Activated CD8-positive, alpha-beta T cell treated with anti-CD3 and anti-CD28 coated beads for 36 hours (primary cell): ENCODE measurements at regions of chr1 and their contacts with region 1.

Region 1: GRCh38 chr1:62082456-62083363 is 111.9 kb upstream of the L1TD1 start:
- DNase-seq: peak; percentile 55
- ATAC-seq: peak; percentile 74
- H3K4me3 Mint-ChIP-seq: no peak overlapping the region
- H3K27ac Mint-ChIP-seq: no peak overlapping the region
- H3K4me1 Mint-ChIP-seq: no peaks in the 10 kb centered on the region
- H3K27me3 Mint-ChIP-seq: no peaks in the 10 kb centered on the region
- CTCF ChIP-seq: peak; percentile 93

Region 2: GRCh38 chr1:61950418-61950817 is 132.3 kb before region 1 on chr1:
- CTCF ChIA-PET with region 1: no interaction called
- POLR2A ChIA-PET with region 1: no interaction called
- intact Hi-C with region 1: no loop called
- DNase-seq: no peak
- ATAC-seq: no peak
- H3K4me3 Mint-ChIP-seq: no peak overlapping the region
- H3K27ac Mint-ChIP-seq: no peak overlapping the region
- H3K4me1 Mint-ChIP-seq: no peaks in the 10 kb centered on the region
- H3K27me3 Mint-ChIP-seq: no peaks in the 10 kb centered on the region
- CTCF ChIP-seq: peak; percentile 47

Region 3: GRCh38 chr1:61973100-61973837 is 109.4 kb before region 1 on chr1:
- CTCF ChIA-PET with region 1: no interaction called
- POLR2A ChIA-PET with region 1: no interaction called
- intact Hi-C with region 1: no loop called
- DNase-seq: no peak
- ATAC-seq: no peak
- H3K4me3 Mint-ChIP-seq: no peak overlapping the region
- H3K27ac Mint-ChIP-seq: no peak overlapping the region
- H3K4me1 Mint-ChIP-seq: no peaks in the 10 kb centered on the region
- H3K27me3 Mint-ChIP-seq: no peaks in the 10 kb centered on the region
- CTCF ChIP-seq: no peak

Region 4: GRCh38 chr1:62070384-62071011 is 12.2 kb before region 1 on chr1:
- CTCF ChIA-PET with region 1: interaction called, 11 read pairs
- POLR2A ChIA-PET with region 1: no interaction called
- intact Hi-C with region 1: no loop called
- DNase-seq: peak; percentile 24
- ATAC-seq: no peak
- H3K4me3 Mint-ChIP-seq: no peak overlapping the region
- H3K27ac Mint-ChIP-seq: no peak overlapping the region
- H3K4me1 Mint-ChIP-seq: no peaks in the 10 kb centered on the region
- H3K27me3 Mint-ChIP-seq: no peaks in the 10 kb centered on the region
- CTCF ChIP-seq: peak; percentile 67

Region 5: DNA sequence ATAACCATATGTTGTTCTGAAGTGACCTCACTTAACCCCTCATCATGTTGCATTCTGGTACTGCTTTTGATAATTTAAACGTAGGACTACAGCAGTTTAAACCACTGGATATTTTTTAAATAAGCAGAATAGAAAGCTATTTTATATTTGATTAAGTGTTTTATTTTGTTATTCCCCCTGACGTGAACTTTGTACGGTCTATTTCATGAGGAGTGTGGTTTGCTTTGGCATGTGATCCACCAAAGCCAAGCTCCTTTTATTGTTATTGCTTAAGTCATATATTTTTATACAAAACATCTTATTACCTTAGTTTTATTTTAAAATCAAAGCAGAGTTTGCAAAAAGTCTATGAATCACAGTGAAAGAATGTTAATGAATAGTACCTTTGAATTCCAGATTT is 10.6 kb after region 1 on chr1:
- CTCF ChIA-PET with region 1: interaction called, 26 read pairs
- POLR2A ChIA-PET with region 1: no interaction called
- intact Hi-C with region 1: no loop called
- DNase-seq: no peak
- ATAC-seq: no peak
- H3K4me3 Mint-ChIP-seq: no peak overlapping the region
- H3K27ac Mint-ChIP-seq: no peak overlapping the region
- H3K4me1 Mint-ChIP-seq: no peaks in the 10 kb centered on the region
- H3K27me3 Mint-ChIP-seq: no peaks in the 10 kb centered on the region
- CTCF ChIP-seq: no peak

Region 6: GRCh38 chr1:62131093-62131725 is 48.5 kb after region 1 on chr1:
- CTCF ChIA-PET with region 1: interaction called, 7 read pairs
- POLR2A ChIA-PET with region 1: no interaction called
- intact Hi-C with region 1: loop called (anchors 5 kb)
- DNase-seq: peak; percentile 53
- ATAC-seq: peak; percentile 67
- H3K4me3 Mint-ChIP-seq: no peak overlapping the region
- H3K27ac Mint-ChIP-seq: no peak overlapping the region
- H3K4me1 Mint-ChIP-seq: no peaks in the 10 kb centered on the region
- H3K27me3 Mint-ChIP-seq: no peaks in the 10 kb centered on the region
- CTCF ChIP-seq: peak; percentile 80

Region 7: GRCh38 chr1:62144238-62144831 is 61.6 kb after region 1 on chr1:
- CTCF ChIA-PET with region 1: interaction called, 20 read pairs
- POLR2A ChIA-PET with region 1: interaction called, 3 read pairs
- intact Hi-C with region 1: no loop called
- DNase-seq: peak; percentile 61
- ATAC-seq: peak; percentile 34
- H3K4me3 Mint-ChIP-seq: no peak overlapping the region
- H3K27ac Mint-ChIP-seq: no peak overlapping the region
- H3K4me1 Mint-ChIP-seq: no peaks in the 10 kb centered on the region
- H3K27me3 Mint-ChIP-seq: no peaks in the 10 kb centered on the region
- CTCF ChIP-seq: peak; percentile 68

Region 8: DNA sequence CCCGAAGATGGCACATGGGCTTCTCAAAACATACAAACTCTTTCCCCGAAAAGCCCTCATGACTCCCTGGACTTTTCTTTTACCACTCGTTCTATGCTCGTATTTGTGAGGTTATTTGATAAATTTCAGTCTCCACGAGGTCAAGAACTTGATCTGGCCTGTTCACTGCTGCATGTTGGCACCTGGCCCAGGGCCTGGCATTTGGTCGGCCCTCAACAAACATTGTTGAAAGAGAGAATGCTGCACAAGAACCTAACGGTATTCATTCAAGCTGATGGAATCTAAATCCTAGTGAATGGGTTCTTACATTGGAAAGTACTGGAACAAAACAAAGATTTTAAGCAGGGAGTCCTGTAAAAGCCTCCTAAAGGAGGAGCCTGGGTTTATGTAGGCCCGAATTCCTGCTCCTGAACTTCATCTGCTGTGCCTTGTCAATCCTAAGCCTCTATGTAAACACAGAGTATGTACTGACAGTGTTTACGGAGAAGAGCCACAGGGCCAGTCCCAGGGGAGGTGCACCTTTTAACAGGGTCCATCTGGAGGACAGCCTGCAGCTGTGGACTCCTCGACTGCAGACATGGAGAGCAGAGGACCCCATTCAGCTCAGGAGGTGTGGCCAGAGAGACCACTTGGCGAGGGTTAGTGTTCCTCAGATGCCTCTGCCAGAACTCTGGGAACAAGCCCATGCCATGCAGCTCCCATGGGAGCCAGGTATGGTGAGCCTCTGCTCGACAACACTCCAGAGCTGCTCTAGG is 158.8 kb after region 1 on chr1:
- CTCF ChIA-PET with region 1: no interaction called
- POLR2A ChIA-PET with region 1: no interaction called
- intact Hi-C with region 1: no loop called
- DNase-seq: no peak
- ATAC-seq: no peak
- H3K4me3 Mint-ChIP-seq: no peak overlapping the region
- H3K27ac Mint-ChIP-seq: no peak overlapping the region
- H3K4me1 Mint-ChIP-seq: no peaks in the 10 kb centered on the region
- H3K27me3 Mint-ChIP-seq: no peaks in the 10 kb centered on the region
- CTCF ChIP-seq: no peak

Region 9: DNA sequence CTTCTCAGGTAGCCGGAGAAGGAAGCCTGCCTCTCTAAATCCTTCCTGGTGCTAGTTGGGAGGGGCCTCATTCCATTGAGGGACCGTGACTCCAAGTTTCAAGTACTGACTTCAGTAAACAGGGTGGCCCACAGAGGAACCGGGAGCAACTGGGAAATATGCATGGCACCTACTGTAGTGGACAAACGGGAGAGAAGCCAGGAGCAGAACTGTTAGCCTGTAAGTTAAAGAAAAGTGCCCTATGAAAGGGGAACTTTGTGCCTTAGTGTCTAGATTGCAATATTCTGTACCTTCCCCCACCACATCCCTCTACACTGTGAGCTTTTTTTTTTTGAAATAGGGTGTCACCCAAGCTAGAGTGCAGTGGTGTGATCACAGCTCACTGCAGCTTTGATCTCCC is 269.7 kb after region 1 on chr1:
- CTCF ChIA-PET with region 1: no interaction called
- POLR2A ChIA-PET with region 1: no interaction called
- intact Hi-C with region 1: no loop called
- DNase-seq: no peak
- ATAC-seq: no peak
- H3K4me3 Mint-ChIP-seq: no peak overlapping the region
- H3K27ac Mint-ChIP-seq: no peak overlapping the region
- H3K4me1 Mint-ChIP-seq: no peaks in the 10 kb centered on the region
- H3K27me3 Mint-ChIP-seq: no peaks in the 10 kb centered on the region
- CTCF ChIP-seq: no peak